Sciatic nerve (tissue), 2 donors: ENCODE measurements at regions of chr15 and their contacts with region 1.

Region 1: GRCh38 chr15:84631706-84632272 is 22.3 kb downstream of the WDR73 start:
- DNase-seq: no peak
- ATAC-seq: no peak

Region 2: GRCh38 chr15:84600851-84601838 is 30.6 kb before region 1 on chr15 and contains the start of gene ZSCAN2:
- intact Hi-C with region 1: loop called (anchors 2 kb)
- DNase-seq: peak; percentile 96
- ATAC-seq: peak; percentile 99
- total RNA-seq, gene ZSCAN2: 8.5 TPM